ENCODE measurements at regions of chr12 and their contacts with region 1.

Region 1: GRCh38 chr12:120710031-120710804 is at the start of gene UNC119B:
- DNase-seq: peak; percentile 49
- H3K4me3 Mint-ChIP-seq: peak within 1 kb of the TSS; percentile 89
- H3K27ac Mint-ChIP-seq: peak within 1 kb of the TSS; percentile 55
- H3K4me1 Mint-ChIP-seq: peaks cover 16% of the 10 kb centered on the region
- H3K27me3 Mint-ChIP-seq: no peaks in the 10 kb centered on the region
- CTCF ChIP-seq: no peak
- total RNA-seq, gene UNC119B: 31.0 and 34.7 TPM in 2 replicates

Region 2: DNA sequence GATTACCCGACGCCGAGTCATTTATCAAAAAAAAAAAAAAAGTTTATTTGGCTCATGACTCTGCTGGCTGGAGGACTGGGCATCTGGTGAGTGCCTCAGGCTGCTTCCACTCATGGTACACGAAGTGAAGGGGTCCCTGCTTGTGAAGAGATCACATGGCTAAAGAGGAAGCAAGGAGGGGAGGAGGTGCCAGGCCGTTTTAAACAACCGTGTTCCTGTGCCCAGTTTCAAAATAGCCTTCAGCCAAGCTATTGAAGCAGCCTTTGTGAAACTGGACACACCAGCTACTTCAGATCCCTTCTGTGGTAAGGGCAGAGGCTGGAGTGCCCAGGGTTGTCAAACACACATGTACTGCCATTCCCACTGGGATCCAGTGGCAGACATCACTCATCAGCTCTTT is 136.7 kb before region 1 on chr12:
- CTCF ChIA-PET with region 1: no interaction called
- POLR2A ChIA-PET with region 1: no interaction called
- intact Hi-C with region 1: no loop called
- DNase-seq: no peak
- H3K4me3 Mint-ChIP-seq: no peak overlapping the region
- H3K27ac Mint-ChIP-seq: no peak overlapping the region
- H3K4me1 Mint-ChIP-seq: peaks cover 5% of the 10 kb centered on the region
- H3K27me3 Mint-ChIP-seq: no peaks in the 10 kb centered on the region
- CTCF ChIP-seq: no peak

Region 3: DNA sequence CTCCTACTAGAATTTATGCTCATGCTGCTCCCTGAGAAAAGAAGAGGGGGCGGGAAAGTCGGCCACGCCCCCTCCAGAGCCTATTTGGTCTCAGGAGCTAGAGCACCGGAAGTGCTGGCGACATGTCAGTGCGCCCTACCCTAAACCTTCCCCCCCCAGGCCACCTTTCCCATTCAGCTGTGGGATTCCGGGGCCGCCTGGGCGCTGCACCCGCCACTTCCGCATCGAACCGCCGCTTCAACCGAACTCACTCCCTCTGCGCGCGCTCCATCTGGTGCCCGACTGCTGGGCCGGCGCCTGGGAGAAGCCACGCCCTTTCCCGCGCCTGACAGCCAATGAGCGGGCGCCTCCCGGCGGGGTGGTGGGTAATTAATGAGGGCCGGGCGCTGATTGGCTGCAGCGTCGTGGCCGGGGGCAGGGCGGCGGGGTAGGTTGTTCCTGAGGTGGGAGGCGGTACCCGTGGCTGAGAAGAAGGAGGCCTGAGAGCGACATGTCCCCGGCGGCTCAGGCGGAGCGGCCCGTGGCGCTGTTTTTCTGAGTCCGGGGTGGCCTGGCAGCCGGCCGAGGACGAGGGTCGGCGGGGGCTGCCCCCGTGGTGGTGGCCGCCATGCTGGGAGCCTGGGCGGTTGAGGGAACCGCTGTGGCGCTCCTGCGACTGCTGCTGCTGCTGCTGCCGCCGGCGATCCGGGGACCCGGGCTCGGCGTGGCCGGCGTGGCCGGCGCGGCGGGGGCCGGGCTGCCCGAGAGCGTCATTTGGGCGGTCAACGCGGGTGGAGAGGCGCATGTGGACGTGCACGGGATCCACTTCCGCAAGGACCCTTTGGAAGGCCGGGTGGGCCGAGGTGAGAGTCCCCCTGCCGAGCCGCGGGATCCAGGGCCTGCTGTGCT is 23.3 kb before region 1 on chr12 and contains the start of gene MLEC:
- CTCF ChIA-PET with region 1: interaction called, 3 read pairs
- POLR2A ChIA-PET with region 1: interaction called, 46 read pairs
- intact Hi-C with region 1: no loop called
- DNase-seq: peak; percentile 98
- H3K4me3 Mint-ChIP-seq: peak within 1 kb of the TSS; percentile 87
- H3K27ac Mint-ChIP-seq: peak within 1 kb of the TSS; percentile 86
- H3K4me1 Mint-ChIP-seq: peaks cover 27% of the 10 kb centered on the region
- H3K27me3 Mint-ChIP-seq: no peaks in the 10 kb centered on the region
- CTCF ChIP-seq: no peak
- total RNA-seq, gene MLEC: 107 and 144 TPM in 2 replicates

Region 4: DNA sequence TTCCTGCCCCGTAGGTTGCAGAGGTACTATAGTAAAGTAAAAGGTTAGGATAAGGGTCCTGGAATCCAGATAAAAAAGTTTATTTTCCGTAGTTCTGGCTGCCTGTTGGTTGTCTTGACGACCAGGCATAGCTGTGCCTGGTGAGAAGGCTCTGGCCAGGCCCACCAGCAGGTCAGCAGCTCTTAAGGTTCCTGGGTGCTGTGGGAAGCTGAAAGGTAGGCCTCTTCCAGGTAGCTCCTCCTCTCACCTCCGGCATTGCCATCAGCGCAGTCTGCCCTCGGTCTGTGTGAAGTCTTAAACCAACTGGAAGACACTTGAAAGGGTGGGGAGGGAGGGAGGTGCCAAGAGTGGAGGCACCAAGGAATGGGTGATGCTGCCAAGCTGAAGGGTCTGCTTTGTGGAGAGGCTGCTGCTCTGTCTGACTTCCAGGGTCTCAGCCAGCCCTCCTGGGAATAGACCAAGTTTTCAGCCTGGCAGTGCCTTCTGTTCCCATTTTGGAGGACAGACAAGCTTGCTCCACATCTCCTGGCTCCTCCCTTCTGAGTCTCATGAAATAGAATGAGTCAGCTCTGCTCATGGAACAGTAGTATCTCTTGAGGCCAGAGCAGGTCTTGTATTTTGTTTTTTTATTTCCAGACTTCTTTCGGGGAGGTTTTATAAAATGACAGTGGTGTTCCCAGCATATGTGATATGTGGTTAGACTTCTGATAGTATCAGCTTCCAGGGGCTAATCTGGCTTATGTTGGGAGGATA is 10.2 kb after region 1 on chr12:
- CTCF ChIA-PET with region 1: interaction called, 5 read pairs
- POLR2A ChIA-PET with region 1: interaction called, 17 read pairs
- intact Hi-C with region 1: no loop called
- DNase-seq: peak; percentile 61
- H3K4me3 Mint-ChIP-seq: no peak overlapping the region
- H3K27ac Mint-ChIP-seq: peak overlapping the region; percentile 57
- H3K4me1 Mint-ChIP-seq: peaks cover 16% of the 10 kb centered on the region
- H3K27me3 Mint-ChIP-seq: no peaks in the 10 kb centered on the region
- CTCF ChIP-seq: no peak

Measured in MCF 10A (cell line).